MCF 10A (cell line): ENCODE measurements at regions of chr9 and their contacts with region 1.

Region 1: GRCh38 chr9:115373000-115373709 is 255.2 kb upstream of the TNC start:
- DNase-seq: peak; percentile 93
- H3K4me3 Mint-ChIP-seq: peak overlapping the region; percentile 38
- H3K27ac Mint-ChIP-seq: peak overlapping the region; percentile 52
- H3K4me1 Mint-ChIP-seq: peaks cover 15% of the 10 kb centered on the region
- H3K27me3 Mint-ChIP-seq: no peaks in the 10 kb centered on the region
- CTCF ChIP-seq: no peak

Region 2: DNA sequence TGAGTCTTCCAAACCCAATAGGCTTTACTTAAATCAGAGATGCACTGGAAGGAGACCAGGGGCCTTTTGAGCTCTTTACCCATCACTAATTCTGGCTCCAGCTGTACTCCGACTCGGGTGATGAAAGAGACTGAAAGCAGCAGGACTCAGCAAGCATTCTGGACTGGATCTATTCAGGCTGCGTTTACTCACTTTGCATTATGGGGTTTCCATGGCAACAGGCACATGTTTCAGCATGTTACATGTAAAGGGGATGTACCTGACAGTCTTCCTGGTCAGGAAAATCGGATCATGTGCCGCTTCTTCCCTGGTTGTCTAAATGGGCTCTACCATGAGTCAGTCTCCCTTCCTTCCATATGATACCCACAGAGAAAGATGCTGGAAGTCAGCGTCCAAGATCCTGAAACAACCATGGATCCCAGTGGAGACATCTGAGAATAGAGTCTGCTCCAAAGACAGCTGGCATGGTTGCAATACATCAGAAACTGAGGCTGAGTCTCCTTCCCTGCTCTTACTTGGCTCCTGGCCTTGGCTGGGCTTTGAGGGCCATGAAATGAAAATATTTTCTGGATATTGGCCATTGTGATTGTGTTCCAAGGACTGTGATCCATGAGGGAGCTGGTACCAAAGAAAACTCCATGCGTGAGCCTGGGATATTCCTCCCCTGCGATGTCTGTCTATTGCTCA is 152.7 kb before region 1 on chr9:
- CTCF ChIA-PET with region 1: interaction called, 4 read pairs
- POLR2A ChIA-PET with region 1: no interaction called
- intact Hi-C with region 1: loop called (anchors 10 kb)
- DNase-seq: no peak
- H3K4me3 Mint-ChIP-seq: no peak overlapping the region
- H3K27ac Mint-ChIP-seq: no peak overlapping the region
- H3K4me1 Mint-ChIP-seq: no peaks in the 10 kb centered on the region
- H3K27me3 Mint-ChIP-seq: peaks cover 10% of the 10 kb centered on the region
- CTCF ChIP-seq: no peak

Region 3: GRCh38 chr9:115262477-115262876 is 110.7 kb before region 1 on chr9:
- CTCF ChIA-PET with region 1: no interaction called
- POLR2A ChIA-PET with region 1: no interaction called
- intact Hi-C with region 1: loop called (anchors 10 kb)
- DNase-seq: peak; percentile 97
- H3K4me3 Mint-ChIP-seq: no peak overlapping the region
- H3K27ac Mint-ChIP-seq: peak overlapping the region; percentile 52
- H3K4me1 Mint-ChIP-seq: peaks cover 45% of the 10 kb centered on the region
- H3K27me3 Mint-ChIP-seq: no peaks in the 10 kb centered on the region
- CTCF ChIP-seq: no peak